ENCODE measurements at regions of chr4 and their contacts with region 1.

Region 1: GRCh38 chr4:55395529-55396307 is at the start of gene TMEM165:
- DNase-seq: peak; percentile 93 to 96 (median 93)
- ATAC-seq: peak; percentile 94 to 98 (median 98)
- H3K4me3 ChIP-seq: peak within 1 kb of the TSS; percentile 63 to 100 (median 94)
- H3K27ac ChIP-seq: peak within 1 kb of the TSS; percentile 96 to 100 (median 98)
- H3K4me1 ChIP-seq: peaks cover 0 to 42% (median 33%) of the 10 kb centered on the region in 12 donors
- H3K27me3 ChIP-seq: no peaks in the 10 kb centered on the region
- CTCF ChIP-seq: peak in 1 of 12 donors; percentile 7
- POLR2A ChIP-seq: peak; percentile 68 to 97
- total RNA-seq, gene TMEM165: 28.2 to 78.3 (median 53.9) TPM

Region 2: GRCh38 chr4:55345980-55346850 is 49.5 kb before region 1 on chr4 and contains the start of gene SRD5A3:
- intact Hi-C with region 1: loop called (anchors 1 to 10 kb)
- DNase-seq: peak; percentile 86 to 94 (median 88)
- ATAC-seq: peak; percentile 94 to 98 (median 96)
- H3K4me3 ChIP-seq: peak within 1 kb of the TSS; percentile 48 to 97 (median 80)
- H3K27ac ChIP-seq: peak within 1 kb of the TSS; percentile 89 to 100 (median 98)
- H3K4me1 ChIP-seq: peaks cover 4 to 31% (median 16%) of the 10 kb centered on the region in 12 donors
- H3K27me3 ChIP-seq: no peaks in the 10 kb centered on the region
- CTCF ChIP-seq: peak; percentile 90 to 99 (median 98)
- POLR2A ChIP-seq: peak in 1 of 2 donors; percentile 72
- total RNA-seq, gene SRD5A3: 4.5 to 16.8 (median 7.8) TPM